ENCODE measurements at regions of chr15 and their contacts with region 1.

Region 1: DNA sequence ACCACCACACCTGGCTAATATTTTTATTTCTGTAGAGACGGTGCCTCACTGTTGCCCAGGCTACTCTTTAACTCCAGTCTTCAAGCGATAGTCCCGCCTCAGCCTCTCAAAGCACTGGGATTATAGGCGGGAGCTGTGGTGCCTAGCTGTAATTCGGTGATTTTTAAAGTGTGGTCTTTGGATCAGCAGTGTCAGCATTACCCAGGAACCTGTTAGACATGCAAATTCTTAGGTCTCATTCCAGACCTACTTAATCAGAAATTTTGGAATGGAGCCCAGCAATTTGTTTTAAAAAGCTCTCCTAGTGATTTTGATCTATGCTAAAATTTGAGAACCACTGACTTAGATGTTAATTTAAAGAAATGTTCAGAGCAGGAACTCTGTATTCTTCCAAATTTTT is 51.9 kb downstream of the GOLM2 start:
- DNase-seq: no peak
- H3K4me3 ChIP-seq: no peak overlapping the region
- H3K27ac ChIP-seq: no peak overlapping the region
- H3K4me1 ChIP-seq: no peaks in the 10 kb centered on the region
- H3K27me3 ChIP-seq: no peaks in the 10 kb centered on the region
- CTCF ChIP-seq: no peak
- POLR2A ChIP-seq: no peak

Region 2: DNA sequence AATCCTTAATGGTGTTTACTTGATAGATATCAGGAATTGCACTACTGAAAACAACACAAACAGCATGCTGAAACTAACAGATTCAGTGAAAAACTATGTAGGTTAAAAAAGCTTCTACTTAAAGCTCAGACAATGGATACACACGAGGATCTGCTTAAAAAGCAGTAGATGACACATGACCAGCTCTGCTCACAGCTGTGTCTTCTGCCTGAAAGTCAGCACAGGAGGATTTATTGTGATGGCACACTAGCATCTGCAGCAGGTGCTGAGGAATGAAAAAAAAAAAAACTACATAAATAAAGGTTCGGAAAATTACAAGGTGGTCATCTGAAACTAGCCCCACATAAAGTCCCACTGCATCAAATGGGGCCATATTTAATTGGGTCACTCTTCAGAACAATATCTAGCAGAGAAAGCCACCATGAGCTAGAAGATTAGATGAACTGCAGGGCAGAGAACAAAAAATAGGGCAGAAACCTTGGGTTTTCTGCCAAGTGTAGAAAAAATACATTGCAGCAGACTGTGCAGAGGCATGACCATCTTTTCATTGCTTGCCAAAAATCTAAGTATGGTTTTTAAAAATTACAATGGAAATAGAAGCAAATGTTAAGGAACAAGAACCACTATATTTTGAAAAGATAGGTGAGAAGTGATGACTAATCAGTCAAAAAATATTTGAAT is 65.1 kb before region 1 on chr15:
- CTCF ChIA-PET with region 1: no interaction called
- POLR2A ChIA-PET with region 1: no interaction called
- dilution Hi-C with region 1: no loop called
- intact Hi-C with region 1: no loop called
- DNase-seq: no peak
- H3K4me3 ChIP-seq: no peak overlapping the region
- H3K27ac ChIP-seq: no peak overlapping the region
- H3K4me1 ChIP-seq: no peaks in the 10 kb centered on the region
- H3K27me3 ChIP-seq: peaks cover 10 to 12% of the 10 kb centered on the region in 2 experiments
- CTCF ChIP-seq: no peak
- POLR2A ChIP-seq: no peak

Region 3: DNA sequence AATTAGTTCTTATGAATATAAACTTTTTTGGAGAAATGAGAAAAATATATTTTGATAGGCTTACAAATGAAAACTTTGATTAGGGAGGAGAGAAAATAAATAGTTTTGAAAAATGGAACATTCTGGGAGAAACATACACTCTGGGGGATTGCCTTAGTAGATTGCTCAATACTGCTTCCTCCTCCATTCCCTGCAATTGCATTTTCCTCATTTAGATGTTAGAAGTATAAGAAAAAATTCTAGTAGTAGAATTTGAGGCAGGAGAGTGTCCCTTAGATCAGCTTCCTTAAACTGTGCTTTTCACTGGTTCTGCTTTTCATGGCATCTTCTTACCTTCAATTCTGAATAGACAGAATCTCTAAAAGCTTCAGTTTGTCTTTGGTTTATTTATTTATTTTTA is 40.8 kb after region 1 on chr15:
- CTCF ChIA-PET with region 1: no interaction called
- POLR2A ChIA-PET with region 1: no interaction called
- dilution Hi-C with region 1: no loop called
- intact Hi-C with region 1: loop called (anchors 2 kb)
- DNase-seq: no peak
- H3K4me3 ChIP-seq: no peak overlapping the region
- H3K27ac ChIP-seq: no peak overlapping the region
- H3K4me1 ChIP-seq: no peaks in the 10 kb centered on the region
- H3K27me3 ChIP-seq: no peaks in the 10 kb centered on the region
- CTCF ChIP-seq: no peak
- POLR2A ChIP-seq: no peak